IMR-90 (cell line): ENCODE measurements at regions of chr7 and their contacts with region 1.

Region 1: DNA sequence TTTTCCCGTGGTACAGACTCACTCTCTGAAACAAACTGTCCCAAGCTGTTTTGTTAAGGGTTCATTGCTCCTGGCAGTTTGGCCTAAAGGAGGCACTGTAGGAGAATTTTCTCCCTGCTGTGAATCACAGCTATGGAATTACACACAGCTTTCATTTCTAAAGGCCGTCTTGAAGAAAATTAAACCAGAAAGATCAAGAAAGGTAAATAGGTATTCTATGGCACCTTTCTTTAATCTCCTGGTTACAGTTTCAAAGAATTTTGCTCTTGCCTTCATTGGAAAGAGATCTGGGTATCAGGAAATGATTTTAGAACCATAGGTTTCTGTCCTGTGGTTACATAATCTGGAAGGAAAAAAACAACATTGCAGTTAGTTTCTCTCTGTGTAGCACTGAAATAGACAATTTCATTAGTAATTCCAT is 51.2 kb downstream of the PDK4 start:
- DNase-seq: peak; percentile 65
- ATAC-seq: peak; percentile 95
- H3K4me3 ChIP-seq: peak overlapping the region; percentile 36; the same call in 1 of the 2 replicates
- H3K27ac ChIP-seq: no peak overlapping the region
- H3K4me1 ChIP-seq: no peaks in the 10 kb centered on the region
- H3K27me3 ChIP-seq: peaks cover 2% of the 10 kb centered on the region
- CTCF ChIP-seq: peak; percentile 85
- POLR2A ChIP-seq: no peak
- RAD21 ChIP-seq: peak; percentile 69

Region 2: GRCh38 chr7:95045236-95045923 is 499.7 kb before region 1 on chr7:
- CTCF ChIA-PET with region 1: no interaction called
- POLR2A ChIA-PET with region 1: no interaction called
- dilution Hi-C with region 1: no loop called
- in situ Hi-C with region 1: no loop called
- intact Hi-C with region 1: no loop called
- DNase-seq: no peak
- ATAC-seq: no peak
- H3K4me3 ChIP-seq: no peak overlapping the region
- H3K27ac ChIP-seq: no peak overlapping the region
- H3K4me1 ChIP-seq: no peaks in the 10 kb centered on the region
- H3K27me3 ChIP-seq: no peaks in the 10 kb centered on the region
- CTCF ChIP-seq: no peak
- POLR2A ChIP-seq: no peak
- RAD21 ChIP-seq: no peak; the same call in 1 of the 2 replicates

Region 3: DNA sequence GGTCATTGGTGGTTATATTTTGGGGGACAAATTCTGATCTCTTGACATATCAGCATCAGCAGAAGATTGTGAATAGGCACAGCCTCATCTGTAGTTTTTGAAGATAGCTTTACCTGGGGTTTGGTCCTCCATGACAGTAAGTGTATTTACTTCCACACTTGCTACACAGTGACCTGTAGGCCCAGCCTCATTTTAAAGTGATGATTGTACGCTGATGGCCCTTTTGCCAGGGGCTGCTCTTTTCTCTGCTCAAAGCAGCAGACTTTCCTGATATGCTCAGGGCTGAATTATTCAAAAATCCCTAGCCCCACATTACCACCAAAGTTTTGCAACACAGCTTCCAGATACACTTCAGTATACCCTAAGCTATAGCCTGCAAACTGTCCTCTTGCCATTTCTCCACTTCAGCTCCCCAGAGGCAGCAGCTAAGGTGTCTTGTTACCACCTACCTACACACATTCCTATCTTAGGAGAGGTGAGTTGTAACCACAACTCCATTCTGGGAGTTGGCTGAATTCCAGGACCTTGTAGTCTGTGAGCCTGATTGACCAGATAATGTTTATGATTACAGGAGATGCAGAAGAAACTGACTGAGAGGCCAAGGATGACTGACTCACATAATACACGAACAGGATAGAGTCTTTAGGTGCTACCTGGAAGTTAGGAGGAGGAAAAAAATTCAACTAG is 53.3 kb before region 1 on chr7:
- CTCF ChIA-PET with region 1: no interaction called
- POLR2A ChIA-PET with region 1: no interaction called
- dilution Hi-C with region 1: no loop called
- in situ Hi-C with region 1: no loop called
- intact Hi-C with region 1: no loop called
- DNase-seq: no peak
- ATAC-seq: no peak
- H3K4me3 ChIP-seq: no peak overlapping the region
- H3K27ac ChIP-seq: no peak overlapping the region
- H3K4me1 ChIP-seq: no peaks in the 10 kb centered on the region
- H3K27me3 ChIP-seq: peaks cover 3% of the 10 kb centered on the region; the same call in 1 of the 2 replicates
- CTCF ChIP-seq: no peak
- POLR2A ChIP-seq: no peak
- RAD21 ChIP-seq: no peak

Region 4: GRCh38 chr7:95511716-95512260 is 33.3 kb before region 1 on chr7:
- CTCF ChIA-PET with region 1: interaction called, 12 read pairs
- POLR2A ChIA-PET with region 1: no interaction called
- dilution Hi-C with region 1: no loop called
- in situ Hi-C with region 1: no loop called
- intact Hi-C with region 1: no loop called
- DNase-seq: peak; percentile 63
- ATAC-seq: peak; percentile 95
- H3K4me3 ChIP-seq: no peak overlapping the region
- H3K27ac ChIP-seq: no peak overlapping the region
- H3K4me1 ChIP-seq: no peaks in the 10 kb centered on the region
- H3K27me3 ChIP-seq: peaks cover 6% of the 10 kb centered on the region
- CTCF ChIP-seq: peak; percentile 85
- POLR2A ChIP-seq: no peak
- RAD21 ChIP-seq: peak; percentile 61

Region 5: GRCh38 chr7:95527033-95527775 is 17.9 kb before region 1 on chr7:
- CTCF ChIA-PET with region 1: interaction called, 7 read pairs
- POLR2A ChIA-PET with region 1: no interaction called
- dilution Hi-C with region 1: no loop called
- in situ Hi-C with region 1: no loop called
- intact Hi-C with region 1: loop called (anchors 1 kb)
- DNase-seq: peak; percentile 44
- ATAC-seq: peak; percentile 91
- H3K4me3 ChIP-seq: no peak overlapping the region
- H3K27ac ChIP-seq: no peak overlapping the region
- H3K4me1 ChIP-seq: no peaks in the 10 kb centered on the region
- H3K27me3 ChIP-seq: peaks cover 11% of the 10 kb centered on the region
- CTCF ChIP-seq: peak; percentile 86
- POLR2A ChIP-seq: no peak
- RAD21 ChIP-seq: peak; percentile 80

Region 6: DNA sequence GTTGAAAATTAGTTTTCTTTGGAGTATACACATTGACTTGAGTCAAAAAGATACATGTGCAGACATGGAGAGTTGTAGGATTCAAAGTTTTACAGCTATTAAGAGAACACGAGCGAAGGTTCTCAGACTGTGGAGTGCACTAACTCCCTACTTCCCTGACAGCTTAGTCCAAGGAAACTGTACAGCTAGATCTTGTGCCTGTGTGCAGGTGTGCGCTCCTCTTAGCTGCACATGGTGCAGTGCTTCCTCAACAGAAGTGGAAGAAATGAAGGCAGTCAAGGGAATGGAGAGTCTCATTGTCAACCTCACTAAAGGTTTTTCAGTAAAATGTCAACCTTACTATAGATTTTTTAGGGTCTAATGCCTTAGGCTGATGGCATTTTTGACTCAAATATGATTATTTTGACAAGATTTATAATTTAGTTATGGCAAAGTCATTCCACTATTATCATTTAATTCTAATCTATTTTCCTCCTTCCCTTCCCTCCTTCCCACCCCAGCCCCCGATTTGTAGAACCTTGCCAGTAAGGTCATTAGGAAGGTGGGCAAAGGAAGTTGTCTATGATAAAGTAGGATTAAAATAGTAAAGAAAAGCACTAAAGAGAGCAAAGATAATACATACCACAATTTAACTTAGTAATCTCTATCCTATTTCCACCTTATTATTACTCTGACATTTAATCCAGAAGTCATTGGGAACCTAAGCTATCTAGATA is 37.6 kb after region 1 on chr7:
- CTCF ChIA-PET with region 1: no interaction called
- POLR2A ChIA-PET with region 1: no interaction called
- dilution Hi-C with region 1: no loop called
- in situ Hi-C with region 1: no loop called
- intact Hi-C with region 1: loop called (anchors 2 kb)
- DNase-seq: no peak
- ATAC-seq: no peak
- H3K4me3 ChIP-seq: no peak overlapping the region
- H3K27ac ChIP-seq: no peak overlapping the region
- H3K4me1 ChIP-seq: no peaks in the 10 kb centered on the region
- H3K27me3 ChIP-seq: no peaks in the 10 kb centered on the region
- CTCF ChIP-seq: no peak
- POLR2A ChIP-seq: no peak
- RAD21 ChIP-seq: no peak

Region 7: GRCh38 chr7:95608359-95609173 is 63.5 kb after region 1 on chr7:
- CTCF ChIA-PET with region 1: interaction called, 3 read pairs
- POLR2A ChIA-PET with region 1: no interaction called
- dilution Hi-C with region 1: no loop called
- in situ Hi-C with region 1: no loop called
- intact Hi-C with region 1: loop called (anchors 2 kb)
- DNase-seq: peak; percentile 93
- ATAC-seq: peak; percentile 100
- H3K4me3 ChIP-seq: no peak overlapping the region
- H3K27ac ChIP-seq: peak overlapping the region; percentile 82
- H3K4me1 ChIP-seq: peaks cover 8% of the 10 kb centered on the region
- H3K27me3 ChIP-seq: no peaks in the 10 kb centered on the region
- CTCF ChIP-seq: no peak
- POLR2A ChIP-seq: no peak
- RAD21 ChIP-seq: no peak

Region 8: DNA sequence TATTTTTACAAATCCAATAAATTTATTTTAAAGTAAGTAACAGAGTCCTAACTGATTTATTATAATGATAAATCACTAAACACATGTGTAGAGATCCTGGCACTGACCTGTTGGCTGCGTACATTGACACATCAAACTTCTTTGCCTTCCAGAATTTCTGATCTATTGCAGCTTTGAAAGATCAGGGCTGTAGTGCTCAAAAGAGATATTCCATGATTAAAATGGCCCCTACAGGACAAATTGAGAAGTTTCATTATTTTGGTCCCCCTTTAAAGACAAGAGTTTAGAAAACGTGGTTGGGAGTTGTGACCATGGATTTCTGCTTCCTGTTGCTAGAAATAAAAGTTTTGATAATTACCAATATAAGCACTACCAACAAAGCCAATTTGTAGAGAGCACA is 138.9 kb after region 1 on chr7:
- CTCF ChIA-PET with region 1: interaction called, 25 read pairs
- POLR2A ChIA-PET with region 1: interaction called, 4 read pairs
- dilution Hi-C with region 1: no loop called
- in situ Hi-C with region 1: no loop called
- intact Hi-C with region 1: loop called (anchors 1 kb)
- DNase-seq: peak; percentile 30
- ATAC-seq: peak; percentile 74
- H3K4me3 ChIP-seq: no peak overlapping the region
- H3K27ac ChIP-seq: no peak overlapping the region
- H3K4me1 ChIP-seq: no peaks in the 10 kb centered on the region
- H3K27me3 ChIP-seq: peaks cover 2% of the 10 kb centered on the region; the same call in 1 of the 2 replicates
- CTCF ChIP-seq: peak; percentile 64
- POLR2A ChIP-seq: no peak
- RAD21 ChIP-seq: peak; percentile 57

Region 9: GRCh38 chr7:95690367-95690947 is 145.4 kb after region 1 on chr7:
- CTCF ChIA-PET with region 1: interaction called, 25 read pairs
- POLR2A ChIA-PET with region 1: interaction called, 4 read pairs
- dilution Hi-C with region 1: no loop called
- in situ Hi-C with region 1: no loop called
- intact Hi-C with region 1: no loop called
- DNase-seq: peak; percentile 41
- ATAC-seq: peak; percentile 78
- H3K4me3 ChIP-seq: no peak overlapping the region
- H3K27ac ChIP-seq: no peak overlapping the region
- H3K4me1 ChIP-seq: no peaks in the 10 kb centered on the region
- H3K27me3 ChIP-seq: peaks cover 2% of the 10 kb centered on the region; the same call in 1 of the 2 replicates
- CTCF ChIP-seq: peak; percentile 49
- POLR2A ChIP-seq: no peak
- RAD21 ChIP-seq: peak; percentile 37